Ovary (tissue), 10 donors: ENCODE measurements at regions of chr17 and their contacts with region 1.

Region 1: GRCh38 chr17:68771867-68772515 is 170.8 kb upstream of the FAM20A start:
- DNase-seq: peak in 1 of 5 donors; percentile 53
- H3K4me3 ChIP-seq: peak overlapping the region; percentile 11
- H3K27ac ChIP-seq: peak overlapping the region in 1 of 2 donors; percentile 68
- H3K4me1 ChIP-seq: peaks cover 8% of the 10 kb centered on the region
- H3K27me3 ChIP-seq: no peaks in the 10 kb centered on the region
- CTCF ChIP-seq: peak; percentile 30 to 73 (median 69)
- EP300 ChIP-seq: no peak
- POLR2A ChIP-seq: no peak

Region 2: DNA sequence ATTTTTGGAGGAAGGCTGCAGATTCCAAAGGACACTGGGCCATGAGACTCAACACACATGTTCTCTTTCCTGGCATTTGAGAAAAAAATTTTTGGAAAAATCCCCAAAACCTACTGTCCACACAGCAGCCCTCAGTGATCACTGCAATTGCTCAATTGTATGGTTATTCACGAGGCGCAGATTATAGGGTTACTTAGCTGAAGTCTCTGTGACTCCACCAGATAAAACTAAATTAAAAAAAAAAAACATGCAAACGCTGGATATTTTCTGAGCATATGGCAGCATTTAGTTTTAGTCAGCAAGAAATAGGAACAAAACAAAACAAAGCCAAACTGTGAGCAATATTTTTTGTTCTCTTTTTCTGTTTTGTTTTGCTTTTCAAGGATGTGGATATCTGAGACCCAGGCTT is 87.0 kb before region 1 on chr17:
- intact Hi-C with region 1: no loop called
- DNase-seq: peak in 2 of 5 donors; percentile 31 to 44
- H3K4me3 ChIP-seq: no peak overlapping the region
- H3K27ac ChIP-seq: peak overlapping the region in 1 of 2 donors; percentile 67
- H3K4me1 ChIP-seq: peaks cover 10% of the 10 kb centered on the region
- H3K27me3 ChIP-seq: no peaks in the 10 kb centered on the region
- CTCF ChIP-seq: no peak
- EP300 ChIP-seq: no peak
- POLR2A ChIP-seq: no peak

Region 3: GRCh38 chr17:69235338-69235930 is 463.4 kb after region 1 on chr17:
- intact Hi-C with region 1: loop called (anchors 2 to 5 kb)
- DNase-seq: peak; percentile 64 to 87 (median 72)
- H3K4me3 ChIP-seq: no peak overlapping the region
- H3K27ac ChIP-seq: no peak overlapping the region
- H3K4me1 ChIP-seq: peaks cover 2% of the 10 kb centered on the region
- H3K27me3 ChIP-seq: no peaks in the 10 kb centered on the region
- CTCF ChIP-seq: peak; percentile 45 to 75 (median 58)
- EP300 ChIP-seq: no peak
- POLR2A ChIP-seq: no peak

Region 4: GRCh38 chr17:69597898-69598692 is 826.1 kb after region 1 on chr17:
- intact Hi-C with region 1: no loop called
- DNase-seq: no peak
- H3K4me3 ChIP-seq: no peak overlapping the region
- H3K27ac ChIP-seq: no peak overlapping the region
- H3K4me1 ChIP-seq: no peaks in the 10 kb centered on the region
- H3K27me3 ChIP-seq: no peaks in the 10 kb centered on the region
- CTCF ChIP-seq: no peak
- EP300 ChIP-seq: no peak
- POLR2A ChIP-seq: no peak